Activated CD8-positive, alpha-beta memory T cell treated with anti-CD3 and anti-CD28 coated beads, Interleukin-2, amount 10 ng/mL, durations not matched to agents 7 days and 5 days (primary cell): ENCODE measurements at regions of chr9 and their contacts with region 1.

Region 1: GRCh38 chr9:74773886-74774479 is 113.7 kb downstream of the TRPM6 start:
- DNase-seq: peak; percentile 79
- ATAC-seq: peak; percentile 60
- H3K4me3 Mint-ChIP-seq: no peak overlapping the region
- H3K27ac Mint-ChIP-seq: no peak overlapping the region
- H3K4me1 Mint-ChIP-seq: peaks cover 16% of the 10 kb centered on the region
- H3K27me3 Mint-ChIP-seq: peaks cover 15% of the 10 kb centered on the region

Region 2: GRCh38 chr9:74952281-74953151 is 178.5 kb after region 1 on chr9 and contains the start of gene C9orf40:
- CTCF ChIA-PET with region 1: interaction called, 51 read pairs
- DNase-seq: peak; percentile 94
- ATAC-seq: peak; percentile 93
- H3K4me3 Mint-ChIP-seq: peak within 1 kb of the TSS; percentile 98
- H3K27ac Mint-ChIP-seq: peak within 1 kb of the TSS; percentile 97
- H3K4me1 Mint-ChIP-seq: peaks cover 45% of the 10 kb centered on the region
- H3K27me3 Mint-ChIP-seq: no peaks in the 10 kb centered on the region
- total RNA-seq, gene C9orf40: 19.0 to 25.5 TPM

Region 3: DNA sequence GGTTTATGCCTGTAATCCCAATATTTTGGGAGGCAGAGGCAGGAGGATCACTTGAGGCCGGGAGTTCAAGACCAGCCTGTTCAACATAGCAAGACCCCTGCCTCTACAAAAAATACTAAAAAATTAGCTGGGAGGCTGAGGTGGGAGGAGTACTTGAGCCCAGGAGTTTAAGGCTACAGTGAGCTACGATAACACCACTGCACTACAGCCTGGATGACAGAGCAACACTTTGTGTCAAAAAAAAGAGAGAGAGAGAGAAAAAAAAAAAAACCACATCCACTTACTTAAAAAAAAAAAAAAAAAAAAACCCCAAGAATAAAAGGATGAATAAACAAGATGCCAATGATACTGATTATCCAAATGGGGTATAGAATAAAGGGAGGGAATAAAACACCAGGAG is 239.8 kb after region 1 on chr9:
- CTCF ChIA-PET with region 1: interaction called, 21 read pairs
- DNase-seq: no peak
- ATAC-seq: no peak
- H3K4me3 Mint-ChIP-seq: no peak overlapping the region
- H3K27ac Mint-ChIP-seq: peak overlapping the region; percentile 40
- H3K4me1 Mint-ChIP-seq: peaks cover 29% of the 10 kb centered on the region
- H3K27me3 Mint-ChIP-seq: no peaks in the 10 kb centered on the region

Region 4: DNA sequence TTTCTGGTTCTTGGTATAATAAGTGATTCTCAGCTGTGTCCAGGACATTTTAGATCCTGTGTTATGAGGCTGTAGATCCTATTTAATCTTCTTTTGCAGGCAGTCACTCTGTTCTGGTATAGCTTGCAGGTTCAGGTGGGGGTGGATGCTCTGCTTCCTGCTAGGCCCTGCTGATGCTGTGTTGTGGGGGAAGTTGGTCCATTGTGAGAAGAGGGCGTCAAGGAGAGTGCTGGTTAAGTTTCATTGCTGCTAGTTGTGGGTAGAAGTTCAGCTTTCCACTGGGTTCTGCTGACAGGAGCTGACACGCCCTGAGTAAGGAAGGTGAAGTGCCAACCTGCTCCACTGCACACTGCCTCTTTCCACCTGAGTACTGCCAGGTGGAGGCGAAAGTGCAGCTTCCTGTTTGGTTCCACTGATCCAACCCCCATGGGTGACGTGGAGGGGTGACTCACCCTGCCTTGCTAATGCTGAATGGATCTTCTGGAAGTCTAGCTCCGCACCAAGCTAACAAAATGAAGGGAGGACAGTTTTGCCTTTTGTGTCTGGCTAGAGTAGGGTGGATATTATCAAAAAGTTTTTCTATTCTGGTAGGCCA is 297.6 kb after region 1 on chr9:
- CTCF ChIA-PET with region 1: interaction called, 47 read pairs
- DNase-seq: peak; percentile 66
- ATAC-seq: peak; percentile 78
- H3K4me3 Mint-ChIP-seq: no peak overlapping the region
- H3K27ac Mint-ChIP-seq: peak overlapping the region; percentile 66
- H3K4me1 Mint-ChIP-seq: peaks cover 18% of the 10 kb centered on the region
- H3K27me3 Mint-ChIP-seq: no peaks in the 10 kb centered on the region

Region 5: DNA sequence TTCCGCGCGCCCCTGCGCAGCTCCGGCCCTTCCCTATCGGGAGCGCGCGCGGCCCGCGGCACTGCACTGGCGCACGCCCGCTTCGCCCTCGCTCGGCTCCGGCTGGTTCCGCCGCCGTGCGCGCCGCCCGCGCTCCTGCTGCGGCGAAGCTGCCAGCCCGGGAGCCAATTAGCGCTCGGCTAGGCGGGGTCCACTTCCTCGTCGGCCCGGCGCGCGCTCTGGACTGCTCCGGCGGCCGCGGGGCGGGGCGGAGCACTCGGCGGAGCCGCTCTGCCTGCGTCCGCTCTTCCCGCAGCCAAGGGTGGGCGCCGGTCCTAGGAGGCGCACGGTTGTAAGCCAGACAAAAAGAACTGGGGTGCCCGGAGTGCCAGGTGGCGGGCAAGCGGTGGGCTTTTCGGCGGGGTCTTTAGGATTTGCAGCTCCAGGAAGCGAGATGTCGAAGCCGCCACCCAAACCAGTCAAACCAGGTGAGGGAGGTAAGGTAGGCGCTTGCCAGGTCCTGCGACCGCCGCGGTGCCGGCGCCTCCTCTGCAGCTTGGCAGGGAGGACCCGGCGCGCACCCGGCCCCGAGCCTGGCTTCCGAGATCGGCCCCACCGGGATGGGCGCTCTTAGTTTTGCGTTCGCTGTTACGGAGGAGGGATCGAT is 314.4 kb after region 1 on chr9 and contains the start of gene OSTF1:
- CTCF ChIA-PET with region 1: interaction called, 17 read pairs
- DNase-seq: peak; percentile 95
- ATAC-seq: peak; percentile 89
- H3K4me3 Mint-ChIP-seq: peak within 1 kb of the TSS; percentile 93
- H3K27ac Mint-ChIP-seq: peak within 1 kb of the TSS; percentile 97
- H3K4me1 Mint-ChIP-seq: peaks cover 61% of the 10 kb centered on the region
- H3K27me3 Mint-ChIP-seq: no peaks in the 10 kb centered on the region
- total RNA-seq, gene OSTF1: 149 to 198 TPM